Ovary (tissue), 10 donors: ENCODE measurements at regions of chr11 and their contacts with region 1.

Region 1: GRCh38 chr11:114159802-114160632 is 100.5 kb downstream of the ZBTB16 start:
- DNase-seq: peak; percentile 99 to 100 (median 100)
- H3K4me3 ChIP-seq: peak overlapping the region; percentile 7
- H3K27ac ChIP-seq: peak overlapping the region; percentile 85 to 89
- H3K4me1 ChIP-seq: peaks cover 54% of the 10 kb centered on the region
- H3K27me3 ChIP-seq: no peaks in the 10 kb centered on the region
- CTCF ChIP-seq: peak in 1 of 3 donors; percentile 6
- EP300 ChIP-seq: peak; percentile 99
- POLR2A ChIP-seq: peak; percentile 29

Region 2: GRCh38 chr11:114075891-114076441 is 84.1 kb before region 1 on chr11:
- intact Hi-C with region 1: loop called in 1 of 4 experiments (anchors 5 kb)
- DNase-seq: peak in 3 of 5 donors; percentile 42 to 66 (median 55)
- H3K4me3 ChIP-seq: peak overlapping the region; percentile 5
- H3K27ac ChIP-seq: peak overlapping the region; percentile 10 to 21
- H3K4me1 ChIP-seq: peaks cover 46% of the 10 kb centered on the region
- H3K27me3 ChIP-seq: no peaks in the 10 kb centered on the region
- CTCF ChIP-seq: peak; percentile 44 to 67 (median 47)
- EP300 ChIP-seq: no peak
- POLR2A ChIP-seq: no peak

Region 3: GRCh38 chr11:114110952-114111947 is 48.8 kb before region 1 on chr11:
- intact Hi-C with region 1: loop called in 1 of 4 experiments (anchors 5 kb)
- DNase-seq: peak; percentile 63 to 77 (median 71)
- H3K4me3 ChIP-seq: no peak overlapping the region
- H3K27ac ChIP-seq: peak overlapping the region; percentile 43 to 80
- H3K4me1 ChIP-seq: peaks cover 26% of the 10 kb centered on the region
- H3K27me3 ChIP-seq: no peaks in the 10 kb centered on the region
- CTCF ChIP-seq: no peak
- EP300 ChIP-seq: peak; percentile 93
- POLR2A ChIP-seq: no peak

Region 4: DNA sequence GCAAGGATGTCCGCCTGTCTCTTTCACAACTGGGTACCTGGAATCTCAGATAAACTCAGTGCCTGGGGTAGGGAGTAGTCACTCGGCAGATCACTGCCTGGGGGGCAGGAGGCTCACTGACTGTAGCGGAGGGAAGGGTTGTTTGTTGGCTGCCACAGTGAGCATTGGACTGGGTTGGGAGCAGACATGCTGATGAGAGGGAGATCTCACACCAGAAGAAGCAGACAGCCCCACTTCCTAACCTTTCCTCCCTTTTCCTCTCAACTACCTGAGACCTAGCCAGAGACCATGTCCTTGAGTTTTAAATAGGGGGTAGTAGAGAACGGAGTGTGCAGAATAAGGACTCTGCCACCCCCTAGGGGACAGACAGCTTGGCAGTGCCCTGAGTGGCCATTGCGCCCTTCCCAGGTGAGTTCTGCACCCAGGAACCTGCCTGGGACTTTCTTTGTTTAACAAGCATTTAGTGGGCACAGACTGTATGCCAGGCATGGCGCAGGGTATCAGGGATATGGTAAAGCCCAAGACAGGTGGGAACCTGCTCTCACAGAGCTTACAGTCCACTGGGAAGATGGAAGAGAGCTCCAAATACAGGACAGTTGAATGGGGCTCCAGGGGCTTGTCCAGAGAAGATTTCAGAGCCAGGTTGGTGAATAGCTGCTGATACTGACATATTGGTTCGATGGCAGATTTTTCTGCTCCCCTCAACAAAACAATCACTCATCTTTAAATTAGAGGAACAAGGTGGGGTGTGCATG is 20.5 kb after region 1 on chr11:
- intact Hi-C with region 1: loop called in 1 of 4 experiments (anchors 2 kb)
- DNase-seq: peak in 4 of 5 donors; percentile 59 to 68 (median 63)
- H3K4me3 ChIP-seq: peak overlapping the region; percentile 43
- H3K27ac ChIP-seq: peak overlapping the region; percentile 81 to 99
- H3K4me1 ChIP-seq: peaks cover 44% of the 10 kb centered on the region
- H3K27me3 ChIP-seq: no peaks in the 10 kb centered on the region
- CTCF ChIP-seq: peak in 1 of 3 donors; percentile 60
- EP300 ChIP-seq: no peak
- POLR2A ChIP-seq: peak; percentile 30

Region 5: GRCh38 chr11:114197799-114198500 is 37.9 kb after region 1 on chr11:
- intact Hi-C with region 1: no loop called
- DNase-seq: peak; percentile 69 to 84 (median 69)
- H3K4me3 ChIP-seq: no peak overlapping the region
- H3K27ac ChIP-seq: peak overlapping the region; percentile 74 to 77
- H3K4me1 ChIP-seq: peaks cover 31% of the 10 kb centered on the region
- H3K27me3 ChIP-seq: no peaks in the 10 kb centered on the region
- CTCF ChIP-seq: no peak
- EP300 ChIP-seq: peak; percentile 78
- POLR2A ChIP-seq: no peak

Region 6: DNA sequence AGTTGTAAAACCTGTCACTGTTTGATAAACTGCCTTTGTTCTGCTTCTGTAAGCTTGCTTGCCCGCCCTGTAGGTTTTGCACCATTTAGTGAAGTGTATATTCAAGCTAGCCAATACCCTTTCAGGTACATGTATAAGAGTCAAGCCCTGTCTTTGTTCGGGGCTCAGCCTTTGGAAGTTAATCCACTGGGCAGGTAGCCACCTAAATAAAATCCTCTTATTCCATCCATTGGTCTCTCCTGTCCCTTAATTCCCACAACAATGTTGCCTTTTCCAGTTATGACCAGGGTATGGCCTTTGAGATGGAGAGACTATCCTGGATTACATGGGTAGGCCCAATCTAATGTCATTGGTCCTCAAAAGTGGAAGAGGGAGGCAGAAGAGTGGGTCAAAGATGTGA is 365.7 kb after region 1 on chr11:
- intact Hi-C with region 1: no loop called
- DNase-seq: no peak
- H3K4me3 ChIP-seq: no peak overlapping the region
- H3K27ac ChIP-seq: no peak overlapping the region
- H3K4me1 ChIP-seq: no peaks in the 10 kb centered on the region
- H3K27me3 ChIP-seq: no peaks in the 10 kb centered on the region
- CTCF ChIP-seq: no peak
- EP300 ChIP-seq: no peak
- POLR2A ChIP-seq: no peak

Region 7: GRCh38 chr11:115555336-115556090 is 1395.5 kb after region 1 on chr11:
- intact Hi-C with region 1: no loop called
- DNase-seq: no peak
- H3K4me3 ChIP-seq: no peak overlapping the region
- H3K27ac ChIP-seq: no peak overlapping the region
- H3K4me1 ChIP-seq: no peaks in the 10 kb centered on the region
- H3K27me3 ChIP-seq: no peaks in the 10 kb centered on the region
- CTCF ChIP-seq: no peak
- EP300 ChIP-seq: no peak
- POLR2A ChIP-seq: no peak